OCI-LY7 (cell line): ENCODE measurements at regions of chrX and their contacts with region 1.

Region 1: GRCh38 chrX:47144626-47145394 is at the starts of genes NDUFB11 and RBM10:
- DNase-seq: peak; percentile 94
- H3K4me3 ChIP-seq: peak within 1 kb of the TSS; percentile 95
- H3K27ac ChIP-seq: peak within 1 kb of the TSS; percentile 93
- H3K4me1 ChIP-seq: peaks cover 20% of the 10 kb centered on the region
- CTCF ChIP-seq: peak; percentile 67
- total RNA-seq, gene NDUFB11: 139 TPM in 2 replicates
- total RNA-seq, gene RBM10: 40.1 and 45.6 TPM in 2 replicates

Region 2: DNA sequence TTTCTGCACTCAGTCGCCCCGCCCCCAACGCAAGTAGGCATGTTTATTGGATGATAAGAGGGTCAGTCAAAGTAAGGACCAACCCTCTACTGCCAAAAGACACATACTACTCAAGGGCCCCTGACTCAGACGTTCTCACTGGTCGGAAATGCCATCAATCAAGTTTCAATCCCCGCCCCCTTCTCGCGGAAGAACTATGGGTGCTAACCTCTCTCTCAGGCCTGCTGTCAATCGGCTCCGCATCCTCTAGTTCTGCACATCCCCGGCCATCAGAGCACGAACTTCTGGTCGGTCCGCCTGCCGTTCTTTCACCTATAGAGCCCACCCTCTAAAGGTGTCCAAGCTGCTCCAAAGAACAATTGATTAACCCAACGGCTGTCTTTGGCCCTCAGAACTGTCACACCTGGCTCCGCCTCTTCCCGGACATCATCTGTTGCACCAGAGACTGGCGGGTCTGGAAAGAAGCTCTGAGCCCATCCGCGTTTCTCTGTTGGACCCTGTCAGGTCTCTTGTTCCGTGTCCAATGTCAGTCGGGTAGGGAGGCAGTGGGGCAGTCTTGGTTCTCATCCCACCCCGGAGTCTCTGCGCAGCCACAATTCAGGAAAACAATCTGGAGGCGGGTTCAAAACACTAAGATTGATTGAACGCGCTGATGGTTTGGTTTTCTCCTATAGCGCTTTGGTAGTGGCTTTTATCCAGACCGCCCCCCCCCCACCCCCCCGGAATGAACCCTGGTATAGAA is 15.5 kb before region 1 on chrX:
- CTCF ChIA-PET with region 1: no interaction called
- POLR2A ChIA-PET with region 1: interaction called, 12 read pairs
- intact Hi-C with region 1: no loop called
- DNase-seq: peak; percentile 91
- H3K4me3 ChIP-seq: peak overlapping the region; percentile 81
- H3K27ac ChIP-seq: peak overlapping the region; percentile 66
- H3K4me1 ChIP-seq: peaks cover 4% of the 10 kb centered on the region
- CTCF ChIP-seq: no peak

Region 3: GRCh38 chrX:47217642-47218279 is 73.0 kb after region 1 on chrX:
- CTCF ChIA-PET with region 1: no interaction called
- POLR2A ChIA-PET with region 1: no interaction called
- intact Hi-C with region 1: no loop called
- DNase-seq: peak; percentile 96
- H3K4me3 ChIP-seq: peak overlapping the region; percentile 98
- H3K27ac ChIP-seq: peak overlapping the region; percentile 80
- H3K4me1 ChIP-seq: peaks cover 26% of the 10 kb centered on the region
- CTCF ChIP-seq: no peak

Region 4: GRCh38 chrX:47233337-47234113 is 88.7 kb after region 1 on chrX:
- CTCF ChIA-PET with region 1: no interaction called
- POLR2A ChIA-PET with region 1: no interaction called
- intact Hi-C with region 1: loop called (anchors 2 kb)
- DNase-seq: peak; percentile 90
- H3K4me3 ChIP-seq: peak overlapping the region; percentile 77
- H3K27ac ChIP-seq: peak overlapping the region; percentile 91
- H3K4me1 ChIP-seq: peaks cover 20% of the 10 kb centered on the region
- CTCF ChIP-seq: no peak